Cardiac septum (tissue), 1 donor: ENCODE measurements at regions of chr2 and their contacts with region 1.

Region 1: DNA sequence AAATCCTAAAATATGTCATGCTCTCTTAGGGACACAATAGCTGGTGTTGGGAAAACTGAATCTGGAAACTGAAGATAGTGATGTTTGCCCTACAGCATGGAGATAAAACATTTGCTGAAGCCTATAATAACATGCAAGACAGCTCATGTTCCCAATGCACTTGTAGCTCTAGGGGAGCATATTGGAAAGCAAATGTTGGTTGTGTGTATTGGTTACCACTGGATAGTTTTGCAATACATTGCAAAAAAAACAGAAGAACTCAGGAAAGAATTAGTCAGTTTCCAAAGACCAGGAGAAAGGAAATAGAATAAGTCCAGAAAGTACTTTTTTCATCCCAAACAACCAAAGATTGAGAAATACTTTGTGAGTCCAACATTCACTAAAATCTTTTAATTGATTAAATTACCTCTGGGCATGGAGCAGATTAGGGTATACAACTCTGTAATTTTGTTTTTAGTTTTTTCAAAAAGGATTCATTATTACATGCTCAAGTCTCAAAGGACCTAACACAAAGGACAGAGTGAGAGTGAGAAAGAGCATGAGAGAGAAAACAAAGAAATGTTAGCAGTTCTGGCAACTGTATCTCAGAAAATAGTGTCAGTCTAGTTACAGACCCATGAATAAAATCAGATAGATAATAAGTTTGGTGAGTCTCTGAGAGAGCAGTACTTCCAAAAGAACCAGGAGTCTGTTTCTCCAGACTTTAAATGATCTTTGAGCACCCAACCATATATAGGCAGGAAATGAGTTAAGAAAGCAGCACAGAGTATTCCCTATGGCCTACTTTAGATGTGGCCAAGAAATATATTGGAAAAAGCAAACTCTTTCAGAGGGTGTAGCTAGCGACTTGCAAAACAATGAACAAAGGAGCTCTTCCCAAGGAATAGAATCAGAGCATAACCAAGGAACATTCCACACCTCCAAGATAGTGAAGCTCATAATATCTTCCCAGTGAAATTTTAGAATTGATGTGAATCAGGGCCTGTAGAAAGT is 36.6 kb upstream of the COL3A1 start:
- DNase-seq: no peak

Region 2: DNA sequence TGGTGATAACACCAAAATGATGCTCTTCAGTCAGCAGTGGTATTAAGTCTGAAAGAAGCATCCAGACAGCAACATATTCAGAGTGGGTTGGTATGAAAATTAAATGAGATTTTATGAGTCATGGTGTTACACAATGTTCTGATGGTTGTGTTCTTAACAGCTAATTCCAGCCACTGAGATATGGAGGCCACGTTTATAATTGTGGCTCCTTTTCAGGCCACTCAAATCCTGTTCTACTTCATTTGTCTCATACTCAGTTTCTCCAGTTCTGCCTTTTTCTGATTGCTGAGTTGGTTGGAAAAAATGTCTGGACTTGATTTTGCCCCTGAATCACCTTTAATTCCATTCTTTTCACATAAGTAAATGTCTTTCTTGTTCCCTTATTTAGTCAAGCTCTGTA is 126.0 kb before region 1 on chr2:
- intact Hi-C with region 1: loop called (anchors 10 kb)
- DNase-seq: no peak

Region 3: GRCh38 chr2:188902901-188903491 is 34.5 kb before region 1 on chr2:
- intact Hi-C with region 1: no loop called
- DNase-seq: no peak

Region 4: GRCh38 chr2:188978291-188979081 is 41.0 kb after region 1 on chr2:
- intact Hi-C with region 1: loop called (anchors 5 kb)
- DNase-seq: no peak